Posterior vena cava (tissue), 2 donors: ENCODE measurements at regions of chr19 and their contacts with region 1.

Region 1: GRCh38 chr19:39524495-39524894 is 8.2 kb downstream of the EID2B start:
- DNase-seq: peak; percentile 34

Region 2: DNA sequence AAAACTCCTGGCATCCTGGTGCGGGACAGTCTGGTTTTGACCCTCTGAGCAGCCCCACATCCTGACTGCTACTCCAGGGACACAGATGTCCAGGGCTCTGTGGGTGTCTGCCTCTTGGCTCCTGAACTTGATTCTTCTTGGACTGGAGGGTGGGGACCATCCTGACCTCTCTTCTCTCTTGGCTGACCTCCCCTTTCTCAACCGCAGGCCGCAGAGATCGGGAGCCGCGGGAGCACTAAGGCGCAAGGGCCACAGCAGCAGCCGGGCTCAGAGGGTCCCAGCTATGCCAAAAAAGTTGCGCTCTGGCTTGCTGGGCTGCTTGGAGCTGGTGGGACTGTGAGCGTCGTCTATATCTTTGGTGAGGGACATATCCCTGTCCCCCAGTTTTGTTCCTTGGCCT is 42.8 kb before region 1 on chr19:
- intact Hi-C with region 1: loop called in 1 of 2 experiments (anchors 1 kb)
- DNase-seq: no peak

Region 3: DNA sequence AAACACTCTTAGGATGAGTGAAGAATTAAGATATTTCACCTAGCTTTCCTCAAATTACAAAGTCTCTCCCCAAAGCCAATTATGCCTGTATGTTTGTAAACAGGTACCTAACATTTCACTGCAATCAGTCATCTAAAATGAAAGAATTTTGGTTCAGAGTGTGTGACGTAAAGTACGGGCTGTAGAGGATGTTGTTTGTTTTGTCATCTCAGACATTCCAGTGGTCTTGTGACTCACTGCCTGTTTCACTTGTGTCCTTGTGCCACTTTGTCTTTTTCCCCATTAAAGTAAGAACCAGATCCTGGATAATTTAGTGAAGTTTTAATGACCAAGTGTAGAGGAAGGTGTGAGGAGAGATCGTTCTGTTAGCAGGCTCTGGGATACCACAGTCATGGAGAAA is 44.1 kb after region 1 on chr19:
- intact Hi-C with region 1: no loop called
- DNase-seq: no peak